Activated naive CD8-positive, alpha-beta T cell treated with anti-CD3 and anti-CD28 coated beads, Interleukin-2, amount 10 ng/mL, durations not matched to agents 7 days and 5 days (primary cell): ENCODE measurements at regions of chr10 and their contacts with region 1.

Region 1: DNA sequence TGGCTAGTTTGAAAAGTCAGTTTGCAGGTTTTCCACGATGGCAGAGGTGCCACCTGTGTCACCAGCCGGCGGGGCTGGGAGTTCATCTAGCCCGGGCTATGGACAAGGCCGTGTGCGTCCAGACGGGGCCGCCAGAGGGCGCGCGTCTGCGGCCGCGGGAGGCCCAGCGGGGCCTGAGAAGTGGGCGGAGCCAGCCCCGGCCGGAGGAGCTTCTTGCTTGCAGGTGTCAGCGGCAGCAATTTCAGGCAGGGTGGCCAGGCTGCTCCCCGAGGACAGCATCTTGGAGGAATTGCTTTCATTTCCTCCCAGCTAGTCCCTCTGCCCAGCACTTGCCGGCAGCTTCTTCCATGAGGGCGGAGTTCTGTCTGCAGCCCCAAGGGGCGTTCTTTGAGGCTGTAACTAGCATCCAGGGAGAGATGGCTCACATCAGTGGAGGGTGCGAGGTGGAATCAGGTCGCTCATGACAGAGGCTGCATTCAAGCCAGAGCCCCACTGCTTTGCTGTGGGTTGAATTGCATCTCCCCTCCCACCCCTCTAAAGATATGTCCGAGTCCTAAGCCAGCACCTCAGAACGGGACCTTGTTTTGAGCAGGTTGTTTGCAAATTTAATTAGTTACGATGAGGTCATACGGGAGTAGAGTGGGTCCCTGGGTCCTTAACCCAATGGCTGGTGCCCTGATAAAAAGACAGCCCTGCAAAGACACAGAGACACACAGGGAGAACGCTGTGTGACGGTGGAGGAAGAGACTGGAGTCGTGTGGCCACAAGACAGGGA is 85.9 kb upstream of the MKI67 start:
- DNase-seq: peak; percentile 94
- ATAC-seq: peak; percentile 74
- H3K4me3 Mint-ChIP-seq: peak overlapping the region; percentile 73
- H3K27ac Mint-ChIP-seq: peak overlapping the region; percentile 80
- H3K4me1 Mint-ChIP-seq: peaks cover 18% of the 10 kb centered on the region
- H3K27me3 Mint-ChIP-seq: peaks cover 4% of the 10 kb centered on the region

Region 2: GRCh38 chr10:128178319-128178958 is 33.7 kb before region 1 on chr10:
- POLR2A ChIA-PET with region 1: interaction called, 12 read pairs
- DNase-seq: peak; percentile 57
- ATAC-seq: peak; percentile 64
- H3K4me3 Mint-ChIP-seq: no peak overlapping the region
- H3K27ac Mint-ChIP-seq: no peak overlapping the region
- H3K4me1 Mint-ChIP-seq: peaks cover 32% of the 10 kb centered on the region
- H3K27me3 Mint-ChIP-seq: no peaks in the 10 kb centered on the region